ENCODE measurements at regions of chr17 and their contacts with region 1.

Region 1: DNA sequence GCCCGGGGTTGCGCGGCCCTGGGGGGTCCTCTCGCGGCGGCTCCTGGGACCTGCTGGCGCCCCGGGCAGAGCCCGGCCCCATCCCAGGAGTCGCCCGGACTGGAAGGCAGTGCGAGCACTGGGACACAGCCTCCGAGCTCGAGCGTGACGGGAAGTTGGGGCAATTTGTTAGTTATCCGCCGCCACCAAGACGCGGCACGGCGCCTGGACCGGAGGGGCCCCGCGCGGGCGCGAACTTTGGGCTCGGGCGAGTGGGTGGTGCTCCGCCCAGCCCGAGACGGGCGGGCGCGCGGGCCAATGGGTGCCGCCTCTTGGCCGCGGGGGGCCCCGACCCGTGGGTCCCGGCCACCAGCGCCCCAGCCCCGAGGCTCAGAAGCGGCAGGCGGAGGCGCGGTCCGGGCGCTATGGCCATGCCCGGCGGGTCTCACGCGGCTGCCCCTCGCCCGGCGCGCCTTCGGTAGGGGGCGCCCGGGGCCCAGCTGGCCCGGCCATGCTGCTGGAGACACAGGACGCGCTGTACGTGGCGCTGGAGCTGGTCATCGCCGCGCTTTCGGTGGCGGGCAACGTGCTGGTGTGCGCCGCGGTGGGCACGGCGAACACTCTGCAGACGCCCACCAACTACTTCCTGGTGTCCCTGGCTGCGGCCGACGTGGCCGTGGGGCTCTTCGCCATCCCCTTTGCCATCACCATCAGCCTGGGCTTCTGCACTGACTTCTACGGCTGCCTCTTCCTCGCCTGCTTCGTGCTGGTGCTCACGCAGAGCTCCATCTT is at the start of gene ADORA2B:
- DNase-seq: peak; percentile 72
- H3K4me3 Mint-ChIP-seq: peak within 1 kb of the TSS; percentile 69
- H3K27ac Mint-ChIP-seq: peak within 1 kb of the TSS; percentile 96
- H3K4me1 Mint-ChIP-seq: peaks cover 31% of the 10 kb centered on the region
- H3K27me3 Mint-ChIP-seq: no peaks in the 10 kb centered on the region
- CTCF ChIP-seq: peak; percentile 64
- total RNA-seq, gene ADORA2B: 21.7 and 26.0 TPM in 2 replicates

Region 2: GRCh38 chr17:15957608-15958307 is 12.8 kb after region 1 on chr17:
- CTCF ChIA-PET with region 1: interaction called, 9 read pairs
- POLR2A ChIA-PET with region 1: interaction called, 63 read pairs
- intact Hi-C with region 1: no loop called
- DNase-seq: no peak
- H3K4me3 Mint-ChIP-seq: no peak overlapping the region
- H3K27ac Mint-ChIP-seq: no peak overlapping the region
- H3K4me1 Mint-ChIP-seq: peaks cover 36% of the 10 kb centered on the region
- H3K27me3 Mint-ChIP-seq: no peaks in the 10 kb centered on the region
- CTCF ChIP-seq: no peak

Region 3: DNA sequence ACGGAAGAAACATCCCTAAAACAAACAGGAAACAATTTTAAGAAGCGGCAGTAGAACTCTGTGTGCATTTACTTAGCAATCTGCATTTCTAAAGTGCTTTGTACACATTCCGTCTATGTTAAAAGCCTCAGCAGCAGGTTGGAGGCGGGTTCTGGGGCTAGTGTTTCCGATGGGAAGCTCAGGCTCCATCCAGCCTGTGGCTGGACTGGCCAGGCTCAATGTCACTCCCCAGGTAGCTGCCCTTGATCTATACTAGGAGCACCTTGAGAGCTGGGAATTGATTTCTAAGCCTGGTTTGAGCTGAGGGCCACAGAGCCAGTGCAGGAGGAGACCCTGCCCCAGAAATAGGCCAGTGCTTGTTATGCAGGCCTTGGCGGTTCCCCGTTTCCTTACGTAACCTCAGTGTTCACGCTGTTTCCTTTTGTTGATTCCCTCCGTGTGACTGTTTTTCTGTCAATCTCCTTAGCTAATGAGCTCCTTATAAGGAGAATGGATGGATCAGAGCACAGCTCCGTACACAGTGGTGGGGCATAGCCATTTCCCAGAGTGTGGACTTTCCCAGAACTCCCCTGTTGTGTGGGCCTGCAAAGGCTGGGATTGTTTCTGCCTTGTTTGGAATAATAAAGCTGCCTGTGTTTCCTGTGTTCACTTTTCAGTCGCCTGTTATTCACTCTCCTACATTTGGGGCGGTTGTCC is 21.4 kb after region 1 on chr17:
- CTCF ChIA-PET with region 1: interaction called, 6 read pairs
- POLR2A ChIA-PET with region 1: interaction called, 51 read pairs
- intact Hi-C with region 1: no loop called
- DNase-seq: peak; percentile 47
- H3K4me3 Mint-ChIP-seq: peak overlapping the region; percentile 50
- H3K27ac Mint-ChIP-seq: peak overlapping the region; percentile 27
- H3K4me1 Mint-ChIP-seq: peaks cover 33% of the 10 kb centered on the region
- H3K27me3 Mint-ChIP-seq: no peaks in the 10 kb centered on the region
- CTCF ChIP-seq: no peak

Region 4: DNA sequence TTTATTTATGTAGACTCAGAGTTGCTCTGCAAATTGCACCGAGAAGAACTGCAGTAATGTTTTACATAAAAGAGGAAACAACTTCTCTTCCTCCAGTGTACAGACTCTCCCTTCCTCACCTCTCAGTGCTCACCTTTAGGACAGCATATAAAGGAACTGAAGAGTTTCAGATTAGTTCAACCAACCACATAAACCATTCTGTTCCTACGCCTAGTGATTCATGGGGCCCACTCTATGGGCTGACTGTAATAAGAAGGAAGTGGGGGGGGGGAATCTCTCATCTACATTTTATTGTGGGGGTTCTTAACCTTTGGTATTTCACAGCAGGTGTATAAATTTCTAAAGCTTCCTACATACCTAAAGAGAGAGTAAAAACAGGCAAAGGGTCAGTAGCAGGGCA is 36.3 kb after region 1 on chr17:
- CTCF ChIA-PET with region 1: interaction called, 10 read pairs
- POLR2A ChIA-PET with region 1: interaction called, 5 read pairs
- intact Hi-C with region 1: no loop called
- DNase-seq: no peak
- H3K4me3 Mint-ChIP-seq: no peak overlapping the region
- H3K27ac Mint-ChIP-seq: no peak overlapping the region
- H3K4me1 Mint-ChIP-seq: peaks cover 12% of the 10 kb centered on the region
- H3K27me3 Mint-ChIP-seq: no peaks in the 10 kb centered on the region
- CTCF ChIP-seq: no peak

Region 5: GRCh38 chr17:16107165-16107770 is 162.3 kb after region 1 on chr17:
- CTCF ChIA-PET with region 1: no interaction called
- POLR2A ChIA-PET with region 1: no interaction called
- intact Hi-C with region 1: no loop called
- DNase-seq: no peak
- H3K4me3 Mint-ChIP-seq: no peak overlapping the region
- H3K27ac Mint-ChIP-seq: no peak overlapping the region
- H3K4me1 Mint-ChIP-seq: no peaks in the 10 kb centered on the region
- H3K27me3 Mint-ChIP-seq: no peaks in the 10 kb centered on the region
- CTCF ChIP-seq: no peak